ENCODE measurements at regions of chr13 and their contacts with region 1.

Region 1: DNA sequence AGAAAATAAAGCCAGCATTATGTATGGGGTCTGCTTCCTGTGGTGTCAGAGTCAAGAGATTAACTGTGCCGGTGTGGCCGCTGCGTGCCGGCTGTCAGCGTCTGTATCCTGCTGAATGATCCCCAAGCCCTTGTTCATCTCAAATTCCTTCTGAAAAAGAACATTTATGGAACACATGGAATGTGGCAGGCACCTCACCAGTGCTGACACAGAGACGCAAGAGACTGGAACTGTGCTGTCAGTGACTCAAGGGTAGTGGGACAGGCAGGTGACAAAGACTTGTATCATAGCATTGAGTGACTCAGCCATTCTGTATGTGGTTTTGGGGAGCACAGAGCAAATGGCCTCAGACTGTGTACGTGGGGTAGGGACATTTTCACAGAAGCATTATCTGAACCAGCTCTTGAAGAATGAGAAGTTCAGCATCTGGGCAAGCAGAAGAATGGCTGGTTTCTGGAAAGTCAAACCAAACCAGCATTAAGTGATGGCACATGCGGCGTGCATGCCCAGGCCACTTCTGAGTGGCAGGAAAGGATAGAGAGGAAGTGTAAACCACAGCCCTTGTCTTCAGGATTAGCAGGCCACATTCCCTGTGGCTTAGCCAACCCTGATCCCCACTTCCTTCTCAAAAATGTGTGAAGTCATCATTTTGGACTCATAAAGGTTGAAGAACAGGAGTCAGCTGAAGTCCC is 54.0 kb upstream of the IRS2 start:
- DNase-seq: peak; percentile 60 to 94
- H3K4me3 ChIP-seq: peak overlapping the region; percentile 25; the same call in 1 of the 2 replicates
- H3K27ac ChIP-seq: peak overlapping the region; percentile 86
- H3K4me1 ChIP-seq: peaks cover 28% of the 10 kb centered on the region
- H3K27me3 ChIP-seq: no peaks in the 10 kb centered on the region
- CTCF ChIP-seq: no peak

Region 2: DNA sequence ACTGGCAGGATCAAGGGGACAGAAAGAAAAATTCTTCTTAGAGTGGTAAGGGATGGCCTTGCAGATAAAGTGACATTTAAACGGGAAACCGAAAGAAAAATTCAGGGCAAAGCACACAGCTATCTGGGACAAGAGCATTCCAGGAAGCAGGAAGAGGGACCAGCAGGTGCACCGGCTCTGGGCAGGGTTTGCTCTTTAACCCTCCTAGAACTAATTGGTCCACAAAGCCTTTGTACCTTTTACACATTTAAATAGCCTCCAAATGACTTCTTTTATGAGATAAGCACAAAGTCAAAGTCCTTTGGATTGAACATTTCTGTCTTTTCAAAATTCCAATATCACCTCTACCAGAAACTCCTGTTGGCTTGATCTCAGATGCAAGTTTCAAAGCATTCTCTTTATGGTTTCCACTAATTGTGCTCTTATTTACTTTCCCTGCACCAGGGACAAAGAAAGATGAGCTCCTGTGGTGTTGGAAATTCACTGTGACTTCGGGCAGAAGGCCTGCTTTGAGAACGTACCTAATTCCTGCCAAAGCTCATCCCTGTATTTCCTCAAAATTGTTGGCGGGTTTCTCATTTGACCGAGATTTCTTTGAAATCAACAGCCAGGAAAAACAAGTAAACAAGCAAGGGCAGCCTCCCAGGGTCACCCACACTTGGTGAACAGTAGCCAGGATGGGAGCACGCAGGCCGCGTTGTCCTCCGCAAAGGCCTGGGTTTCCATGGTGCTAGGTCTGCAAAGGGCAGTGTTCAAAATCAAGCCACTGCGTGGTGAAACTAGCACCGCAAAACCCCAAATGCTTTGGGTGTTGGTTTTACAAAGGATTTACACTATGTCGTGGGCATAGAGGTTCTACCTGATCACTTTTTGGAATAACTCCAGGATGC is 152.5 kb before region 1 on chr13:
- CTCF ChIA-PET with region 1: no interaction called
- POLR2A ChIA-PET with region 1: no interaction called
- intact Hi-C with region 1: no loop called
- DNase-seq: no peak
- H3K4me3 ChIP-seq: no peak overlapping the region
- H3K27ac ChIP-seq: no peak overlapping the region
- H3K4me1 ChIP-seq: peaks cover 39% of the 10 kb centered on the region
- H3K27me3 ChIP-seq: no peaks in the 10 kb centered on the region
- CTCF ChIP-seq: no peak

Region 3: GRCh38 chr13:109794095-109794494 is 46.3 kb before region 1 on chr13:
- CTCF ChIA-PET with region 1: no interaction called
- POLR2A ChIA-PET with region 1: no interaction called
- intact Hi-C with region 1: loop called (anchors 2 kb)
- DNase-seq: peak; percentile 39 to 82
- H3K4me3 ChIP-seq: no peak overlapping the region
- H3K27ac ChIP-seq: peak overlapping the region; percentile 13
- H3K4me1 ChIP-seq: peaks cover 64% of the 10 kb centered on the region
- H3K27me3 ChIP-seq: no peaks in the 10 kb centered on the region
- CTCF ChIP-seq: no peak

Region 4: GRCh38 chr13:109803830-109804229 is 36.5 kb before region 1 on chr13:
- CTCF ChIA-PET with region 1: no interaction called
- POLR2A ChIA-PET with region 1: no interaction called
- intact Hi-C with region 1: loop called (anchors 1 kb)
- DNase-seq: peak; percentile 75 to 96
- H3K4me3 ChIP-seq: no peak overlapping the region
- H3K27ac ChIP-seq: peak overlapping the region; percentile 81
- H3K4me1 ChIP-seq: peaks cover 27% of the 10 kb centered on the region
- H3K27me3 ChIP-seq: no peaks in the 10 kb centered on the region
- CTCF ChIP-seq: no peak

Region 5: DNA sequence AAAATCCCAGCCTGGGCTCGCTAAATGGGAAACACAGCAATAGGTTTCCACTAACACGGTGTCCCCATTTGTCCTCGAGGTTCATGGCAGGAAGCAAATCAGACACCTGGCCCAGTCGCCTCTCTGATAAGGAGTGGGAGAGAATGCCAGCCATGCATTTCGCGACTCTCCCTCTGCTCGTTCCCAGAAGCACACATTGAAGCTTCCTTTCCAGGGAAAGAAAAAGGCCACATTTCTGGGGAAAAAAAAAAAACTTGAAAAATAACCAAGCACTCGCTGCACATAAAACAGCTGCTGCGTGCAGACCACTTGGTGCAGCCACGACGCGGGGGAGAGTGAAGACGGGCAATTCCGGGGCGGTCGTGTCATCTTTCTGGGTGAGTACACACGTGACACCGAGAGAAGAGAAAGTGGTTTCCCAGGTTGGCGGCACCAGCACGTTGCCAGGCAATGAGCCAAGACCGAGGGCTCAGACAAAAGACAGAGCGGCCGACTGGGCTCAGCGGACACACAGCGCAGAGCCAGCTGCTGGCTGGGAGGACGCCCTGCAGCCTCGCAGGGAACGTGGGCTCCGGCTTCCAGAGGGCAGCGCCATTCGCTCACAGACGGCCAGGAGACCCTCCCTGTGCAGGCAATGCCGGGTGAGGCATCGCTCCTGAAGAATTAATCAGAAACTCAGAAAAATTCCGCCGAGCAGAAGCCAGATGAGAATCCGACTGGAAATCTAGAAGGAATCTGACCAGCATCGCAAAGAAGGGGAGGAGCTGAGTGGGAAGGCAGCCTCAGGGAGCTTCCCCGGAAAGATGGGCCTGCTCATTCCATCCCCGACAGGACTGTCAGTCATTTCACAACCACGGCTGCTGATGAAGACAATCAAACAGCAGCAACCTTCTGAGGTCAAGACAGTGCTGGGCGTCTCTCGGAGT is 29.2 kb after region 1 on chr13:
- CTCF ChIA-PET with region 1: no interaction called
- POLR2A ChIA-PET with region 1: no interaction called
- intact Hi-C with region 1: loop called (anchors 2 kb)
- DNase-seq: peak; percentile 82
- H3K4me3 ChIP-seq: peak overlapping the region; percentile 54; the same call in 1 of the 2 replicates
- H3K27ac ChIP-seq: peak overlapping the region; percentile 79
- H3K4me1 ChIP-seq: peaks cover 82% of the 10 kb centered on the region
- H3K27me3 ChIP-seq: no peaks in the 10 kb centered on the region
- CTCF ChIP-seq: peak; percentile 40; the same call in 1 of the 2 replicates

Measured in PC-9 (cell line).